ENCODE measurements at regions of chr15 and their contacts with region 1.

Region 1: GRCh38 chr15:55241891-55242290 is 45.1 kb upstream of the RSL24D1 start:
- DNase-seq: no peak
- ATAC-seq: peak; percentile 33
- H3K4me3 Mint-ChIP-seq: no peak overlapping the region
- H3K27ac Mint-ChIP-seq: peak overlapping the region; percentile 88
- H3K4me1 Mint-ChIP-seq: peaks cover 78% of the 10 kb centered on the region
- H3K27me3 Mint-ChIP-seq: no peaks in the 10 kb centered on the region

Region 2: DNA sequence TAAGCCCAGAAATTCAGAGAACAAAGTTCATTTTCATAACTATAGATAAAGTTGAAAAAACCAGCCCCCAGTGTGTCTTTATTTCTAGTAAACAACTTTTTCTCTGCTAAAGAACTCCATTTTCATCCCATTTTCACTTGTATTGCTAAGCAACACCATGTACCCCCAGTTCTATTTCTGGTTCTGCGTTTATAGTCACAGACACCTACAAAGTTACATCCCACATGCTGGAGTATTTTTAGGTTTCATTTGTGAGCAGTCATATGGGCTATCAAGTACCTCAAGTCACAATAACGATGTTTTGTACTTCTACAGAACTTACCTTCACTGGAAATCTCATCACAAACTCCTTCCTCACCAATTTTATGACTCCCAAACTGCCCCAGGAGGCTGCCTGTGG is 281.6 kb before region 1 on chr15:
- CTCF ChIA-PET with region 1: no interaction called
- POLR2A ChIA-PET with region 1: no interaction called
- intact Hi-C with region 1: no loop called
- DNase-seq: no peak
- ATAC-seq: no peak
- H3K4me3 Mint-ChIP-seq: no peak overlapping the region
- H3K27ac Mint-ChIP-seq: no peak overlapping the region
- H3K4me1 Mint-ChIP-seq: no peaks in the 10 kb centered on the region
- H3K27me3 Mint-ChIP-seq: peaks cover 2% of the 10 kb centered on the region

Region 3: DNA sequence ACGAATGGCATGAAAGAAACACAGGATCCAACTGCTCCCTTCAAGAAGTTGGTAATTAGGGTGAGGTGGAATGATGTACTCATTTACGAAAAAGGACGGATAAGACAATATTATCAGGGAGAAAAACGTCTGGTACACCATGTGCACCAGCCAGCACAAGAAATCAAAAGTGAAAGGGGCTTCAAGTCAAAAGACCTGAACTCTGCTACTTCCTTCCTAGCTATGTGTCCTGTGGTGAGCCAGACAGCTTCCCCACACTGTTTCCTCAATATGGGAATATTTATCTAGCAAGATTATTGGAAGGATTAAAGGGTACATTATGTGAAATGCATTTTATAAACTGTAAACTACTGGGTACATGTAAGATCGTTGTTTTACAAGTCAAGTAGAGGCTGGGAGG is 13.8 kb after region 1 on chr15:
- CTCF ChIA-PET with region 1: interaction called, 6 read pairs
- POLR2A ChIA-PET with region 1: interaction called, 3 read pairs
- intact Hi-C with region 1: loop called in 1 of 2 experiments (anchors 2 kb)
- DNase-seq: no peak
- ATAC-seq: peak; percentile 27
- H3K4me3 Mint-ChIP-seq: peak overlapping the region; percentile 57
- H3K27ac Mint-ChIP-seq: peak overlapping the region; percentile 87
- H3K4me1 Mint-ChIP-seq: peaks cover 76% of the 10 kb centered on the region
- H3K27me3 Mint-ChIP-seq: no peaks in the 10 kb centered on the region

Region 4: GRCh38 chr15:55279746-55280351 is 38.0 kb after region 1 on chr15:
- CTCF ChIA-PET with region 1: interaction called, 5 read pairs
- POLR2A ChIA-PET with region 1: interaction called, 3 read pairs
- intact Hi-C with region 1: loop called (anchors 1 kb)
- DNase-seq: peak; percentile 73
- ATAC-seq: peak; percentile 78
- H3K4me3 Mint-ChIP-seq: peak overlapping the region; percentile 45
- H3K27ac Mint-ChIP-seq: peak overlapping the region; percentile 95
- H3K4me1 Mint-ChIP-seq: peaks cover 95% of the 10 kb centered on the region
- H3K27me3 Mint-ChIP-seq: no peaks in the 10 kb centered on the region

Region 5: DNA sequence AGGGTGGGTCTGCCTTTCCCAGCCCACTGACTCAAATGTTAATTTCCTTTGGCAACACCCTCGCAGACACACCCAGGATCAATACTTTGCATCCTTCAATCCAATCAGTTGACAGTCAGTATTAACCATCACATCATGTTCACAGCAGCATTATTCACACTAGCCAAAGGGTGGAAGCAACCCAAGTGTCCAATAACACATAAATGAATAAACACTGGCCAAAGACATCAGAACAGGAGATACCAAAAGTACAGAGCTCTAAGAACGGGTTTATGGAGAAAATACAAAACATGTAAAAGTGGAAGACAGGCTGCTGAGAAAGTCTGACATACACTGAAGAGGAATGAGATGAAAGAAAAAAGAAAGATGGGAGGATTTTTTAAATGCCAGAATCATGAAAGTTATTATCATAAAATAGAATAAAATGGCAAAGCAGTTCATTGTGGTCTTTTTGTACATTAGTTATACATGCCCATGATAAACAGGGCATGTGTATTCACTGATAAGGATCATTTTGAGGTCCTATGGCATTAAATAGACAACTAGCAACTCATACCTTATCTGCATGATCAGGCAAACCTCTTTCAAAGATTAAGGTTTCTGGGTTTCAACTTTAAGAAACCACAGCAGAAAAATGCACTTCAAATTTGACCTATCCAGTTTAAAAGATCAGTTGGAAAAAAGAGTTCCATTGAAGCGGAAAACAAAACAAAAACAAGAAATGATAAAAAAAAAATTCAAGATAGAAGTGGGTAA is 243.2 kb after region 1 on chr15:
- CTCF ChIA-PET with region 1: no interaction called
- POLR2A ChIA-PET with region 1: no interaction called
- intact Hi-C with region 1: no loop called
- DNase-seq: no peak
- ATAC-seq: no peak
- H3K4me3 Mint-ChIP-seq: no peak overlapping the region
- H3K27ac Mint-ChIP-seq: no peak overlapping the region
- H3K4me1 Mint-ChIP-seq: no peaks in the 10 kb centered on the region
- H3K27me3 Mint-ChIP-seq: no peaks in the 10 kb centered on the region